ENCODE measurements at regions of chr5 and their contacts with region 1.

Region 1: DNA sequence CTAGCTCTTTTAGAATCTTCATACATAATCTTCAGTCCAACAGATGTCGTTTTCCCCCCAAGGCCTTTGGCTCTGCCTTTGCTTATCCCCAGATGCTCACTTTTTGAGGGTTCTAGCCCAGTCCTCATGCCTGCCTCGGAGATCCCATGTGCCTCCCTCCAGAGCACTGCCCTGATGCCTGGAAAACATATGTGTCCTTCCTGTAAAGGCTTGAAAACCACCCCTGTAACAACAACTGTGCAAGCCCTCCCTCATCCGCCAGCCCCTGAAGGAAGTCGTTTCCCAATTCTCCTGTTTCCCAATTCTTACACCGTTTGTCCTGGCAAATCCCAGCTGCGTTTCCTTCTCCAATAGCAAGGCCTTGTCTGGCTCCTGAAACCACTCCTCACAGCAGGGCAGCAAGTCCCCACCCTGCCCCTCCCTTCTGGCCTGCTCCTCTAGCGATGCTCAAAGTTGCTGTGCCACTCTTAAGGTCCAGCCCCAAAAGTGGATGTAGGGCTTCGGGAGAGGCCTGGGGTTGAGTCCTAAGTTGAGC is 52.2 kb downstream of the SLC36A1 start:
- DNase-seq: no peak
- H3K4me3 ChIP-seq: no peak overlapping the region
- H3K4me3 Mint-ChIP-seq: no peak overlapping the region
- H3K27ac ChIP-seq: peak overlapping the region in 1 of 2 donors; percentile 18
- H3K27ac Mint-ChIP-seq: peak overlapping the region in 4 of 7 donors; percentile 0 to 32 (median 14)
- H3K4me1 ChIP-seq: peaks cover 12 to 16% of the 10 kb centered on the region in 2 donors
- H3K4me1 Mint-ChIP-seq: peaks cover 22% of the 10 kb centered on the region
- H3K27me3 ChIP-seq: no peaks in the 10 kb centered on the region
- H3K27me3 Mint-ChIP-seq: peaks cover 0 to 2% (median 1%) of the 10 kb centered on the region in 3 donors
- CTCF ChIP-seq: no peak

Region 2: GRCh38 chr5:151288180-151288579 is 211.4 kb before region 1 on chr5:
- intact Hi-C with region 1: no loop called
- DNase-seq: no peak
- H3K4me3 ChIP-seq: no peak overlapping the region
- H3K4me3 Mint-ChIP-seq: no peak overlapping the region
- H3K27ac ChIP-seq: no peak overlapping the region
- H3K27ac Mint-ChIP-seq: no peak overlapping the region
- H3K4me1 ChIP-seq: no peaks in the 10 kb centered on the region
- H3K4me1 Mint-ChIP-seq: no peaks in the 10 kb centered on the region
- H3K27me3 ChIP-seq: no peaks in the 10 kb centered on the region
- H3K27me3 Mint-ChIP-seq: peaks cover under 1 to 12% (median 3%) of the 10 kb centered on the region in 3 donors
- CTCF ChIP-seq: no peak

Region 3: GRCh38 chr5:151447174-151448037 is 52.2 kb before region 1 on chr5 and contains the start of gene SLC36A1:
- intact Hi-C with region 1: loop called (anchors 1 to 5 kb)
- DNase-seq: peak; percentile 91 to 93 (median 91)
- H3K4me3 ChIP-seq: peak within 1 kb of the TSS; percentile 79 to 97 (median 84)
- H3K4me3 Mint-ChIP-seq: peak within 1 kb of the TSS; percentile 92 to 97
- H3K27ac ChIP-seq: peak within 1 kb of the TSS; percentile 50 to 96
- H3K27ac Mint-ChIP-seq: peak within 1 kb of the TSS; percentile 89 to 97 (median 94)
- H3K4me1 ChIP-seq: peaks cover 22 to 31% of the 10 kb centered on the region in 2 donors
- H3K4me1 Mint-ChIP-seq: peaks cover 35% of the 10 kb centered on the region
- H3K27me3 ChIP-seq: no peaks in the 10 kb centered on the region
- H3K27me3 Mint-ChIP-seq: peaks cover 0 to 2% (median 0%) of the 10 kb centered on the region in 3 donors
- CTCF ChIP-seq: peak; percentile 95
- polyA plus RNA-seq, gene SLC36A1: 5.3 to 29.4 (median 6.8) TPM

Region 4: DNA sequence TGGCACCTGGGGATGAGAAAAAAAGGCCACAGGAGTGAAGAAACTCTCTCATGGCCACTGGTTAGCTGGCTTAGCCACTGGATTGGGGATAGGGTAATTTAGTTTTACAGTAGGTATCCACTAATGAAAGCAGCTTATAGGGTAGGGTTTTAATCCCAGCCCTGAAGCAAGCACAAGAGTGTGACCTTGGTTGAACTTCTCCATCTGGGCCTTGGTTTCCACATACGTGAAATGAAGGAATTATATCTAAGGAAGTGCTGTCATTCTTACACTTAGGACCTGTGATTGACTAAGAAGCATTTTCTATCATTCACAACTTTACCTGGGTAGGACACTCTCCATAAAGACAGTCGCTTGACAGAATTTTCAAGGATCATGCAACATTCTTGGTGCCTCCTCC is 42.0 kb after region 1 on chr5:
- intact Hi-C with region 1: no loop called
- DNase-seq: peak in 2 of 3 donors; percentile 10 to 38
- H3K4me3 ChIP-seq: no peak overlapping the region
- H3K4me3 Mint-ChIP-seq: no peak overlapping the region
- H3K27ac ChIP-seq: no peak overlapping the region
- H3K27ac Mint-ChIP-seq: peak overlapping the region in 1 of 7 donors; percentile 2
- H3K4me1 ChIP-seq: peaks cover 7% of the 10 kb centered on the region in 2 donors
- H3K4me1 Mint-ChIP-seq: peaks cover 11% of the 10 kb centered on the region
- H3K27me3 ChIP-seq: no peaks in the 10 kb centered on the region
- H3K27me3 Mint-ChIP-seq: peaks cover 0 to 6% (median 3%) of the 10 kb centered on the region in 3 donors
- CTCF ChIP-seq: no peak

Region 5: GRCh38 chr5:151637676-151638075 is 138.1 kb after region 1 on chr5:
- intact Hi-C with region 1: no loop called
- DNase-seq: no peak
- H3K4me3 ChIP-seq: no peak overlapping the region
- H3K4me3 Mint-ChIP-seq: no peak overlapping the region
- H3K27ac ChIP-seq: no peak overlapping the region
- H3K27ac Mint-ChIP-seq: no peak overlapping the region
- H3K4me1 ChIP-seq: peaks cover 30 to 31% of the 10 kb centered on the region in 2 donors
- H3K4me1 Mint-ChIP-seq: peaks cover 33% of the 10 kb centered on the region
- H3K27me3 ChIP-seq: peaks cover 0 to 4% of the 10 kb centered on the region in 2 donors
- H3K27me3 Mint-ChIP-seq: peaks cover 6 to 22% (median 17%) of the 10 kb centered on the region in 3 donors
- CTCF ChIP-seq: no peak

Measured in CD14-positive monocyte (primary cell).